ENCODE measurements at regions of chrX and their contacts with region 1.

Region 1: DNA sequence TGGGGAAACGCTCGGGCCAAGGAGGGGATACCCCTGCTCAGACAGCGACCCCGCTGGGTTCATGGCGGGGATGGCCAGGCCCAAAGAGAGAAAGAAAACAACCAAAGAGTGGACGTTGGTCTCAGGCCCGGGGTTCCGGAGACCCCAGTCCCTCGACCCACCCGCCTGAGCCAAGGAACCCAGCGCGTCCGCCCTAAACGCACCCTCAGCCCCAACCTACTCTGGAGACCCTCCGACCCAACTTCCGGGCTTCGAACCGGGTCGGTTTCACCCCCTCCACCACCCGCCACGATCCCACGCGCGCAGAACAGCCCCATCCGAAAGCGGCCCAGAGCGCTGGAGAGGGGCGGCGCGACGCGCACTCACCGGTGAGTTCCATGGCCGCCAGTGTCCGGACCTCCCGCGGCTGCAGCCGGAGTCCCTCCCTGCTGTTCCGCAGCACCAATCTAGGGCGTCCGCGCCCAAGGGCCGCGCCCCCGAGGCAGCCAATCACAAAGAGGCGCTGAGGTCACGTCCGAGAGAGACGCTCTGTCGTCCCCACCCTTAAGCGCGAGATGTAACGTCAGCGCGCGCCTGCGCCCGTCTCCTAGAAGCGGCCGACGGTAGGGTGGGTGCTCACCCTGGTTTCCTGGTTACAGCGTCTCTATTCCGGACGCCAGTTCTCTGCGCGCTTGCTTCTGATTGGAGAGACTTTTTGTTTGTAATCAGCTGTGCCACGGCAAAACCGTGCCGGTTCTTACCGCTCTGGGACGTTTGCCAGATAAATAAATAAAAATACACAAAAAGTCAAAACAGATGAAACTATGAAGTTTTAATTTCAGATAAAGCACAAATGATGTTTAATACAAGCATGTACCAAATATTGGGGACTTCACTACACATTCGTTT is at the start of gene PIGA:
- DNase-seq: peak; percentile 92 to 97
- ATAC-seq: peak; percentile 98 to 99
- H3K4me3 ChIP-seq: peak within 1 kb of the TSS; percentile 67
- H3K27ac ChIP-seq: peak within 1 kb of the TSS; percentile 73 to 92
- H3K4me1 ChIP-seq: no peaks in the 10 kb centered on the region; the same call in 2 of the 3 replicates
- CTCF ChIP-seq: no peak
- EP300 ChIP-seq: no peak
- POLR2A ChIP-seq: peak; percentile 54
- RAD21 ChIP-seq: no peak
- polyA plus RNA-seq, gene PIGA: 19.7 and 21.2 TPM in 2 replicates

Region 2: DNA sequence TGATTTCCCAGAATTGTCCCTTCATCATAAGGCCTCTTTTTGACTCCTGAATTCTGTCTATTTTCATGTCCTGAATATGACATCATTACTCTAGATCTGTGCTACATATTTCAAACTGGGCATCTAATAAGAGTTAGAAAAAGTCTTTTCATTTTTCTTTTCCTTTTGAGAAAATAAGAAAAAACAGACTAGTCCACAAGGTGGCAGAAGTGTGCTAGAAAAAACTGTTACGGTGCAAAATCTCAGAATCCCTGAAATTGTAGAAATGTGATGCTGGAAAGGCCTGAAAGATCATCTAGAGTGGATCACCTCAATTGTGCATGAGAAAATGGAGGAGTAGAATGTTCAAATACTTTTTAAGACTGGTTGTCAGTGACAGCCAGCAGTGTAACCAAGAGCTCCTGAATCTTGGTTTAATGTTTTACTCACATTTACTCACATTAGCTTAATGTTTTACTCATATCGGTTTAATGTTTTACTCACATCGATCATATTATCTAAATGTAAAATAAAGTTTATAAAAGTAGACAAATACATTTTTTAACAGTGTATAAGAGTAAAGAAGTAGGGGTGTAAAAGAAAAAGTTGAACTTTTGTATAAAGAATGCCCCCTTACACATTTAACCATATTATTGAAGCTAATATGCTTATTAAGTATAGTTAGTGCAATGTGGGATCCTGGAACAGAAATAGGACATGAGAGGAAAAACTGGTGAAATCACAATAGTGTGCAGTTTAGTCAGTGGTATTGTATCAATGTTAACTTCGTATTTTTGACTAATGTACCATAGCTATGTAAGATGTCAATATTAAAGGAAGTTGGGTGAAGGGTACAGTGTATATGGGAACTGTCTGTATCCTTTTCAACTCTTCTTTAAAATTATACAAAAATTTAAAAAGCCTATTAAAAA is 35.2 kb before region 1 on chrX:
- CTCF ChIA-PET with region 1: interaction called, 19 read pairs
- POLR2A ChIA-PET with region 1: no interaction called
- DNase-seq: peak; percentile 25 to 33
- ATAC-seq: peak; percentile 19 to 63; a peak in 3 of 6 replicates
- H3K4me3 ChIP-seq: no peak overlapping the region
- H3K27ac ChIP-seq: peak overlapping the region; percentile 58 to 77
- H3K4me1 ChIP-seq: peaks cover 14% of the 10 kb centered on the region
- CTCF ChIP-seq: peak; percentile 64
- EP300 ChIP-seq: no peak
- POLR2A ChIP-seq: no peak
- RAD21 ChIP-seq: peak; percentile 59 to 70

Region 3: GRCh38 chrX:15895334-15895733 is 560.0 kb after region 1 on chrX:
- CTCF ChIA-PET with region 1: no interaction called
- POLR2A ChIA-PET with region 1: no interaction called
- DNase-seq: no peak
- ATAC-seq: no peak
- H3K4me3 ChIP-seq: no peak overlapping the region
- H3K27ac ChIP-seq: no peak overlapping the region
- H3K4me1 ChIP-seq: no peaks in the 10 kb centered on the region
- CTCF ChIP-seq: no peak
- EP300 ChIP-seq: no peak
- POLR2A ChIP-seq: no peak
- RAD21 ChIP-seq: no peak